Left cardiac atrium (tissue), 4 donors: ENCODE measurements at regions of chr1 and their contacts with region 1.

Region 1: DNA sequence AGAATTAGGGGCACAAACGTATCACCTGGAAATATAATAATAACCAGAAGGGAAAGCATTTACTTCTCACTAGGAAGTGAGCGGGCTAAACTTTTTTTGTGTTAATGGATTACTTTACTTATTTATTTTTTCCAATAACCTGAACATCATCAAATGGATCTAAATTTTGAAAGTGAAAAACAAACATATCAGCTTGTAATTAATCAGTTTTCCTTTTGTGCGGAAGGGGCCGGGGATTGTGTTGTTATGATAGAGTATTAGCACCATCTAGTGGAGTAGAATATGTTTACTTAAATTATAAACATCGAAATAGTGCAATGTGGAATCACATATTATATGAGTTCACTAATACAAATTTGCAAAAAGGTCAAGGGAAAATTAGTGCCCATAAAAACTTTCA is 9.0 kb downstream of the CFH start:
- DNase-seq: no peak
- ATAC-seq: peak; percentile 57 to 61

Region 2: DNA sequence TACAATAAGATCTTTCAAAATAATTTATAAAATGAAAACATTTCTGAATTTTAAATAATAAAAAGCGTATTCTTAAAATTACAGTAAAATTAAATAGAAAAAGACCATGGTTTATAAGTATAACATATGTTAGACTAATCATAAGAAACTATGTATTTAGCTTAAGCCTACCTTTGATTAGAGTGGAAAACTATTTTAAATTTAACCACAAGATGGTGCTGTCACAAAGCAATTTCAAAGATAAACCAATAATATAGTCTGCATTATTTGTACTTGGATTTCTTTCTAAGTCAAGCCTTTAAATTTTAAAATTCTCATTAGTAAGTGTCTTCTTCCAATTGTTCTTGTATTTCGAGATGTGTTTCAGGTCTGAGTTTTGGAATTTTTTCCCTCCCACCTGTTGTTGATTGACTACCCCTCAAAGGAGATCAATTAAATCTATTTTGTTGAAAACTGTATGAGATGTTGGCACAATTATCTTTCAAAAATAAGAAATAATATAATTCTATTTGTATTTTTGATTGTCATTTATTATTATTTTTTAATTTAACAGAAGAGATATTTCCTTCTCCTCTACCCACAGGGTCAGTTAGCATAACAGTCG is 512.4 kb before region 1 on chr1:
- intact Hi-C with region 1: loop called in 1 of 2 experiments (anchors 10 kb)
- DNase-seq: no peak
- ATAC-seq: no peak

Region 3: DNA sequence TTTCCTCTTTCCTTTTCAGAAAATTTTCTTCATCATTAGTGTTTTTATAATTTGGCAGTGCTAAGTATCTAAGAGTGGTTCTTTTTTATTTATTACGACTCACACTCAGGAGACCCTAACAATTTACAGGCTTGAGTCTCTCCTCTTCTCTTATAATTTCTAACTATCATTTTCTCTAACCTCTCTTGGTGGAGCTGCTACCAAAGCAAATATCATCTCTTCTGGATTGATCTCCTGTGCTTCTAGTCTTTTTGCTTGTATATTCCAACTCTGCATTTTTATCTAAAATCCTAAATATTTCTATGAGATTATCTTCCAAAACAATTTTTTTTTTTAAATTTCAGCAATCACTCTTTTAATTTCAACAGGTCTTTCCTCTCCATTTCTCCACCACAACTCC is 302.9 kb before region 1 on chr1:
- intact Hi-C with region 1: loop called in 1 of 2 experiments (anchors 2 kb)
- DNase-seq: no peak
- ATAC-seq: no peak

Region 4: GRCh38 chr1:196546272-196547245 is 114.3 kb before region 1 on chr1:
- intact Hi-C with region 1: no loop called
- DNase-seq: no peak
- ATAC-seq: no peak